ENCODE measurements at regions of chr10 and their contacts with region 1.

Region 1: GRCh38 chr10:87622314-87623004 is 37.2 kb upstream of the PAPSS2 start:
- DNase-seq: no peak
- ATAC-seq: no peak
- H3K4me3 ChIP-seq: no peak overlapping the region
- H3K4me3 Mint-ChIP-seq: no peak overlapping the region
- H3K27ac ChIP-seq: no peak overlapping the region
- H3K27ac Mint-ChIP-seq: no peak overlapping the region
- H3K4me1 ChIP-seq: no peaks in the 10 kb centered on the region
- H3K4me1 Mint-ChIP-seq: no peaks in the 10 kb centered on the region
- H3K27me3 ChIP-seq: no peaks in the 10 kb centered on the region
- H3K27me3 Mint-ChIP-seq: peaks cover 17 to 20% of the 10 kb centered on the region in 2 donors
- CTCF ChIP-seq: no peak

Region 2: DNA sequence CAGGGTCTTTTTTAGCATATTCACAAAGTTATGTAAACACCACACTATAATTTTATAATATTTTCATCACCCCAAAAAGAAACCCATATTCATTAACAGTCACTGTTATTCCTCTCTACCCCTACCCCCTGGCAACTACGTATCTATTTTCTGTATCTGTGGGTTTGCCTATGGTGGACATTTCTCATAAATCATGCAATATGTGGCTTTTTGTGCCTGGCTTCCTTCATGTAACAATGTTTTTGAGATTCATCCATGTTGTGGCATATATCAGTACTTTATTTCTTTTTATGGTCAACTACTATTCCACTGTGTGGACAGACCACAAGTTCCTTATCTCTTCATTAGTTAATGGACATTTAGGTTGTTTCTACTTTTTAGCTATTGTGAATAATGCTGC is 21.9 kb before region 1 on chr10:
- intact Hi-C with region 1: loop called (anchors 1 kb)
- DNase-seq: no peak
- ATAC-seq: no peak
- H3K4me3 ChIP-seq: no peak overlapping the region
- H3K4me3 Mint-ChIP-seq: no peak overlapping the region
- H3K27ac ChIP-seq: no peak overlapping the region
- H3K27ac Mint-ChIP-seq: no peak overlapping the region
- H3K4me1 ChIP-seq: no peaks in the 10 kb centered on the region
- H3K4me1 Mint-ChIP-seq: peaks cover 7 to 8% of the 10 kb centered on the region in 2 donors
- H3K27me3 ChIP-seq: no peaks in the 10 kb centered on the region
- H3K27me3 Mint-ChIP-seq: peaks cover 1 to 5% of the 10 kb centered on the region in 2 donors
- CTCF ChIP-seq: no peak

Measured in natural killer cell (primary cell).